Activated CD4-positive, alpha-beta memory T cell treated with anti-CD3 and anti-CD28 coated beads, Interleukin-2, amount 10 ng/mL, durations not matched to agents 7 days and 5 days (primary cell): ENCODE measurements at regions of chr6 and their contacts with region 1.

Region 1: GRCh38 chr6:16651871-16652270 is 109.4 kb downstream of the ATXN1 start:
- DNase-seq: peak; percentile 29
- H3K4me3 Mint-ChIP-seq: peak overlapping the region; percentile 52
- H3K27ac Mint-ChIP-seq: peak overlapping the region; percentile 88
- H3K4me1 Mint-ChIP-seq: peaks cover 65% of the 10 kb centered on the region
- H3K27me3 Mint-ChIP-seq: no peaks in the 10 kb centered on the region

Region 2: GRCh38 chr6:16618962-16619361 is 32.9 kb before region 1 on chr6:
- CTCF ChIA-PET with region 1: interaction called, 3 read pairs
- POLR2A ChIA-PET with region 1: interaction called, 10 read pairs
- DNase-seq: no peak
- H3K4me3 Mint-ChIP-seq: no peak overlapping the region
- H3K27ac Mint-ChIP-seq: no peak overlapping the region
- H3K4me1 Mint-ChIP-seq: peaks cover 52% of the 10 kb centered on the region
- H3K27me3 Mint-ChIP-seq: no peaks in the 10 kb centered on the region

Region 3: DNA sequence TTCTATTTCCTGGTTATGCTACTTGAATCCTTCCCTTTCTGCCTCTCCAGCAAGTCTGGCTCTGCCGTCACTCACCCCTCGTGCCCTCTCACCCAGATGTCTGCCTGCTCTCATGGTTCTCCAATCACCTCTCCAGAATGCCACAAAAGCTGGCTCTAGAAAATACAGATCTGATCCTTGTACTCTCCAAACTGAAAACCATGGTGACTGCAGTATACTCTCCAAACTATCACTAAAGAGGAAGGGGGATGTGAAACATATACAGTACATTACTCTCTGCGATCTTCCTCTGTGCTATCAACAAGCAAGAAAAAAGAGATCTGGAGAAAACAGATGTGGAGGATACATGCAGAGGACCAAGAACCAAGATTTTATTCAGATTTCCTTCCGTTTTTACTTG is 18.3 kb after region 1 on chr6:
- CTCF ChIA-PET with region 1: interaction called, 3 read pairs
- POLR2A ChIA-PET with region 1: interaction called, 60 read pairs
- DNase-seq: peak; percentile 29
- H3K4me3 Mint-ChIP-seq: peak overlapping the region; percentile 60
- H3K27ac Mint-ChIP-seq: peak overlapping the region; percentile 96
- H3K4me1 Mint-ChIP-seq: peaks cover 79% of the 10 kb centered on the region
- H3K27me3 Mint-ChIP-seq: no peaks in the 10 kb centered on the region

Region 4: DNA sequence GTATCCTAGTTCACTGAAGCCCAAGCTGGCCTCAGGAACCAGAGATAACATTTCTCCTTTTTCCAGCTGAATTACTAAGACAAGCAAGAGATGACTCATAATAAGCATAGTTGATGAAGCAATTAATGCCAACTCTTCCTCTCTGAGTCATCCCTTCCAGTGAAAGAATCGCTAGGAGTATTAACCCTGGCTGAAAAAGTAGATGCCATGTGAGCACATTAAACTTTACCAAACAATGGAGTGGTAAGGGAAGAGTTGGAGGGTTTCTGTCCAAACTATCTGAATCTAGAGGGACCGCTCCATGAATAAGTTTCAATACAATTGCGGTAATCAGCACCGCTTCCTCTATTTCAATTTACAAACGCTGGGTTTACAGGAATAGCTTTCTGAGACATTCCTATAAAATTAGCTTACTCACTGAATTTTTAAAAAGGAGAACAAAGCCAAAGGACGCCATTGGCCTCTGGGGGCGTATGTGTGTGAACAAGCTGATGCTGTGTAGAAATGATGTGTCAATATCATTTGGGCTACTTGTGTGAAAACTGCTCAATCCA is 61.1 kb after region 1 on chr6:
- CTCF ChIA-PET with region 1: no interaction called
- POLR2A ChIA-PET with region 1: interaction called, 16 read pairs
- DNase-seq: no peak
- H3K4me3 Mint-ChIP-seq: peak overlapping the region; percentile 66
- H3K27ac Mint-ChIP-seq: peak overlapping the region; percentile 97
- H3K4me1 Mint-ChIP-seq: peaks cover 70% of the 10 kb centered on the region
- H3K27me3 Mint-ChIP-seq: no peaks in the 10 kb centered on the region